A549 (cell line): ENCODE measurements at regions of chr20 and their contacts with region 1.

Region 1: DNA sequence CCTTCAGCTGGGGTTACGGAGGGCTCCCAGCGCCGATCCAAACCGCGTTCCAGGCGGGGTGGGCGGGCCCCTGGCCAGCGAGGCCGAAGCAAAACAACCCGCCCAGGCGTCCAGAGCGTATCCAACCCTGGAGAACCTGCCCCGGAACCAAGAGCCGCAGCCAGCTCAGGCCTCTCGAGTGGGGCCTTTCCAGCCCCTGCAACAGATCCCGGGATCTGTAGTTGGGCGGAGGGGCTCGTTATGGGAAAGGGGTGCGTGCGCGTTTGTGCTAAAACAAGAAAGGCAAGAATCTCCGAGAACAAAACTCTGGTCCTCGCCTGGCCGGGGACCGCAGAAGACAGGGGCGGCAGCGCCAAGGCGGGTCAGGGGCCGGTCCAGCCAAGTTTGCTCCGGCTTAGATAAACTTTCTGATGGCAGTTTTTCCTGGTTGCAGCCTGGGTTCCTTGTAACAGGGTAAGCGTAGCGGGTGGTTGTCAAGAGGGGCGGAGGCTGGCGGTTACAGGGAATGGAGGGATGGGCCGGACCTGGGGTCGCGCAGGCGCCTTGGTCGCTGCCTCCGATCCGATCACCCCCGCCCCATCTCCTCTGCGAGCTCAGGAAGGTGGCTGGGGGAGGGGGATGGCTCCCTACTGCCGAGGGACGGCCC is 448 bp upstream of the RIN2 start:
- DNase-seq: peak; percentile 96 to 98
- ATAC-seq: peak; percentile 85 to 93
- H3K4me3 ChIP-seq: peak overlapping the region; percentile 72
- H3K27ac ChIP-seq: peak overlapping the region; percentile 85 to 89
- H3K4me1 ChIP-seq: peaks cover 28% of the 10 kb centered on the region
- CTCF ChIP-seq: no peak
- EP300 ChIP-seq: no peak
- POLR2A ChIP-seq: peak; percentile 47
- RAD21 ChIP-seq: peak in 1 of 2 experiments; percentile 11; a peak in 1 of 5 replicates

Region 2: DNA sequence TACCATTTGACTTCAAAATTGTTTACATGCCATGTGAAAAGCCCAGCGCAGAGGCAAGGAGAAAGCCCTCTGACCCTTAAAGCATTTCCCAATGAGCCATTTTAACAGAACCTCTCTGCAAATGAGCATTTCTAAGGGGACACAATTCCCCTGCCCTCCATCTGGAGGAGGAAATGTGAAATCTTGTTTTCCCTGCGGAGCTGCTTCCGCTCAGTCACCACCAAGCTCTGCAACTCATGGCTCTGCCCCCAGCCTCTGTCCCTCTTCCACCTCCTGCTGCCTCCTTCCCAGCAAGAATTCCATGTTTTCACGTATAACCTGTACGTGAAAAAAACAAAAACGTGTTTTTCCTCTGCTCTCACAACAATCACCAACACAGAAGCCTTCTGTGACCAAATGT is 12.8 kb after region 1 on chr20:
- CTCF ChIA-PET with region 1: interaction called, 11 read pairs
- POLR2A ChIA-PET with region 1: interaction called, 4 read pairs
- DNase-seq: no peak
- ATAC-seq: no peak
- H3K4me3 ChIP-seq: no peak overlapping the region
- H3K27ac ChIP-seq: no peak overlapping the region
- H3K4me1 ChIP-seq: peaks cover 12% of the 10 kb centered on the region
- CTCF ChIP-seq: no peak
- EP300 ChIP-seq: no peak
- POLR2A ChIP-seq: no peak
- RAD21 ChIP-seq: no peak